Right ventricle myocardium inferior (tissue), 1 donor: ENCODE measurements at regions of chr6 and their contacts with region 1.

Region 1: GRCh38 chr6:142946181-142946923 is 1.4 kb upstream of the HIVEP2 start:
- DNase-seq: peak; percentile 98
- ATAC-seq: peak; percentile 90

Region 2: DNA sequence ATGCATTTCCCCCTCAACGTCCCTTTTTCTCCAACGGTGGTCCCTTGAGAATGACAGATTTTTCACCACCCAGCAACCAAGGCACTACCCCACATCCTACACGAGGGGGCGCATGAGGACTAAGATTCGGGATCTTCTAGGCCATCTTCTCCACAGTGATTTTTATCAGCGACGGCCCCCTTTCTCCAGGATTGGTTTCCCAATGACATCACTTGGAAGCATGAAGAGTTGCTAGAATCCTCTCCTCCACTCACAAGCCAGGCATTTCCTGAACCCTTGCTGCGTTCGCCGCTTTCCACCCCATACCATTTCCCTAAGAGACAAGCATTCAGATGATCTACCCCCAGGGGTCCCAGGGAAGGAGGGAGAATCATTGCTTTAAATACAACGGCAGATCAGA is 253.4 kb before region 1 on chr6:
- intact Hi-C with region 1: loop called (anchors 5 kb)
- DNase-seq: no peak
- ATAC-seq: peak; percentile 76

Region 3: DNA sequence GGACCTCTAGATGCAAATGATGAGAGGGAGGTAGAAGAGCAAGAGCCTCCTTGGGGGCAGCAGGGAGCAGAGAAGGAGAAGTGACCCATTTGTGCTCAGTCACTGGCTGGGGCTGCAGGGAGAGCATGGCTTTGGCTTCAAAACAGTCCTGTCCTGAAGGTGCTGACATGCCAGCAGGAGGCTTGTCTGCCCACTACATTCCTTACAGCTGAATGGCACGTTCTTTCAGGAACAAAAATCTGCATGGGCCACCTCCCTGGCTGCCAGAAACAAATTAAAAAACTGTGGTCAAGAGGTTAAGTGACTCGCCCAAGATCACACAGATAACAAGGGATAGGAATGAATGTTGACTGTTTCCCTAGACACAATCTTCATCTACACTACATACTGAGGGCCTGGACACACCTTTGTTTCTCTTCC is 190.1 kb before region 1 on chr6:
- intact Hi-C with region 1: loop called (anchors 5 kb)
- DNase-seq: no peak
- ATAC-seq: peak; percentile 73

Region 4: GRCh38 chr6:142845624-142846458 is 100.5 kb before region 1 on chr6:
- intact Hi-C with region 1: loop called (anchors 1 kb)
- DNase-seq: peak; percentile 95
- ATAC-seq: peak; percentile 95

Region 5: DNA sequence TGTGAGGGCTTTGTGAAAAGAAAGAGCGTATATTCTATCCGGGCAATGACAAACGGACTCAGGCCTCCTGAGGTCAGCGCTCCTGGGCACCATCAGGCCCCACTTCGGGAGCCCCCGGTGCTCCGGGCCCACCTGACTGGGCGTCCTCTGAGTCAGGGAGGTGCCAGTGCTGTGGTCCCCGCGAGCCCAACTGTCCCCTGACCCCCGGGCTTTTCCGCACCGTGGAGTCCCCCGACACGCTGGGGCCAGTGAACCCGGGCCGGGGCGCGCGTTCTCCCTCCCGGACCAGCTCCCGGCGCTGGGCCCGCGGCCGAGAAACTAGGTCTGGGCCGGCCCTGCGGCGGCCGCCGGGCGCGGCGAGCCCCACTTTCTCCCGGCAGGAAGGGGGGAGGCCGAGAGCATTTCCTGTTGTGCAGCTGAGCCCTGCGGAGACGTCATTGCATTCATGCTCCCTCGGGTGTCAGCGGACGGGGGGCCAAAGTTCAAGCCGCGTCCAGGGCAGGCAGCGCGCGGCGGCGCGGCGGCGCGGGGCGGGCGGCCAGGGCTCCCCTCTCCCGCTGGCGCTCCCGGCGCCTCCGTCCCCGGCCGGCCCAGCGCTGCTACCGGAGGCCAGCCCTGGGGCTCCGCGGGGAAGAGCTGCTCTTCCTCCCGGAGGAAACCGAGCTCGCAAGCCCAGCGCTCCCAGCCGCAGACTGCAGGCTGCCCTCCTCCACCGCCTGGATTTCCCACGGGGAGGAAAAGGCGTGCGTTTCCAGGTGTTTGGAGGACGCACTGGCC is 19.7 kb before region 1 on chr6:
- intact Hi-C with region 1: loop called (anchors 2 kb)
- DNase-seq: peak; percentile 90
- ATAC-seq: peak; percentile 90

Region 6: GRCh38 chr6:143060354-143060805 is 114.0 kb after region 1 on chr6:
- intact Hi-C with region 1: loop called (anchors 2 kb)
- DNase-seq: peak; percentile 94
- ATAC-seq: peak; percentile 88